Heart left ventricle (tissue), 16 donors: ENCODE measurements at regions of chr4 and their contacts with region 1.

Region 1: DNA sequence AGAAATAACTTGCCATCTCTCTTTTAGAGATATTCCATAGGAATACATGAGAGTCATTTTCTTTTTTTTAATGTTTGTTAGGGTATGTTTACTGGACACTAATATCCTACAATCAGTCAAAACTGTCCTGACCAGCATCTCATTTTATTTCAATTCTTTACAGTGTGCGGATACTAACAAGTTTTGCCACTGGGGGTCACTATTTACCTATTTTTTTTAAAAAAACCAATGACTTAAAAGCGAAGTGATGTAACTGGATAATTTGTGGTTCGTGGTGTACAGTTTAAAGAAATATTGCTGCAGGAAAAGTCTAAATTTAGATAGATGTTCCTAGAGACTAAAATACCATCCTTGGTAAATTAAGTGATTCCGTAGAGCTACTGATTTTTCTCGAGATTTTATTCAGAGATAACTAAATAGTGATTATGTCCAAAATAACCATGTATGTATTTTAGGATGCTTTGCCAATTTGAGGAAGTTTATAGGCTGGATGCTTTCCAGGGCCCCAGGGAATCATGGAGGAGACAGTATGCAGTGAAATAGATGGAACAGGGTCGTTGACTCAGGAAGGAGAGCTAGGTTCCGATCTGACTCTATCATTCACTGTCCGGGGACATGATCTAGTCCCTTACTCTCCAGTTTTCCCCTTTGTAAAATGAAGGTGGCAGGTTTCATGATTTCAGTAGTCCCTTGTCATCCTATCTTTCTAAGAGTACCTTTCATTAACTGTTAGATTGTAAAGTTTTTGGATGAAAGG is 34.0 kb upstream of the GNPDA2 start:
- DNase-seq: no peak
- ATAC-seq: peak; percentile 37 to 83 (median 68)
- H3K4me3 ChIP-seq: no peak overlapping the region
- H3K27ac ChIP-seq: peak overlapping the region in 1 of 12 donors; percentile 16
- H3K4me1 ChIP-seq: peaks cover 0 to 4% (median 0%) of the 10 kb centered on the region in 12 donors
- H3K27me3 ChIP-seq: no peaks in the 10 kb centered on the region
- CTCF ChIP-seq: peak; percentile 30 to 62 (median 48)
- POLR2A ChIP-seq: no peak

Region 2: DNA sequence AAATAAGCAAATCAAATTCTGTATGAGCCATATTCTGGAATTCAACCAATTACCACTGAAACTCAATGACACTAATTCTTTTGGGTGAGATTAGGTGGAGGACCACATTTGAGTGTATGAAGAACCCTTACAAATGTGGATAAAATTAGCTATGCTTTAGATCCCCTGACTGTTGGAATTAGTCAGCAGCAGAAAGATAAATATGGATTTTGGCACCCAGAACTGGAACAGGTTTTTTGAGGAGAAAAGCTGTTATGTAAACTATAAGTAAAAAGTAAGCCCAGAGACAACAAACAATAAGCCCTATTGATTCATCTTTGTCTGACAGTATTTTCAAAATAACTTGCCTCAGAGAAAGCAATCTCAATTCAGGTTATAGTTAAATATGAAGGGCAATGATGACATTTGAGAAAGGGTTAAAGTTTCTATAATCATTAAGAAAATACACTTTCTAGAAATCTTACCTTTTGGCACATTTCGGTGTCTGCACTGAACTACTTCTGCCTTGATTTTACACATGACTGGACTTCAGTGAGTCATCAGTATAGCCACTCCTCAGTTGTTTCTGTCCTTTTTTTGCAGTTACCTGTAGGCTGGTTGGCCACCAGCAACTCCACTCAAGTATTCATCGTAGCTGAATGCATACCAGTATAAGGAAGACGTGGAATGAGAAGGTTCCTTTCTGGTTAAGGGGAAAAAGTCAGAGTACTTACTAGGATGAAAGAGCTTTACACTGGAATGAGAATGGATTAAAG is 391.7 kb before region 1 on chr4:
- intact Hi-C with region 1: no loop called
- DNase-seq: no peak
- ATAC-seq: no peak
- H3K4me3 ChIP-seq: no peak overlapping the region
- H3K27ac ChIP-seq: no peak overlapping the region
- H3K4me1 ChIP-seq: no peaks in the 10 kb centered on the region
- H3K27me3 ChIP-seq: no peaks in the 10 kb centered on the region
- CTCF ChIP-seq: no peak
- POLR2A ChIP-seq: no peak

Region 3: GRCh38 chr4:44629280-44629866 is 130.9 kb before region 1 on chr4:
- intact Hi-C with region 1: no loop called
- DNase-seq: no peak
- ATAC-seq: peak in 2 of 4 donors; percentile 58 to 62
- H3K4me3 ChIP-seq: no peak overlapping the region
- H3K27ac ChIP-seq: no peak overlapping the region
- H3K4me1 ChIP-seq: no peaks in the 10 kb centered on the region
- H3K27me3 ChIP-seq: no peaks in the 10 kb centered on the region
- CTCF ChIP-seq: peak; percentile 48 to 75 (median 66)
- POLR2A ChIP-seq: no peak

Region 4: DNA sequence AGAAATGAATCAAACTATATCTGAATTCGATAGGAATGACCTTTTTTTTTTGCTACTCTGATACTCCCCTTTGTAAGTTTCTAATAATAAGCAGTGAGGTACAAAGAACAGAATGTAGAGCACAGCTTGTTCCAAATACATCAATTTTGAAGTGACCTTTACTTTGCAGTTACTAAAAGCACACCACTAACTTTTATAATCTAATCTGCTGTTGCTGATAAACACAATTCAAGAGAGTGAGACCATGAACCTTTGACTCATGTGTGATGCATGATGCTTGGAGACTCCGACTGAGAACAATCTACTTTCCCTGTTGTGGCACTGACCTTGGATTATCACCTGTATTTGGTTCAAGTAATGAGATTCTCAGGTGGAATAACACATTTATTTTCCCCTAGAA is 57.6 kb after region 1 on chr4:
- intact Hi-C with region 1: loop called in 2 of 10 experiments (anchors 2 to 5 kb)
- DNase-seq: no peak
- ATAC-seq: peak; percentile 91 to 96 (median 94)
- H3K4me3 ChIP-seq: no peak overlapping the region
- H3K27ac ChIP-seq: peak overlapping the region; percentile 56 to 94 (median 78)
- H3K4me1 ChIP-seq: peaks cover 0 to 15% (median 0%) of the 10 kb centered on the region in 12 donors
- H3K27me3 ChIP-seq: no peaks in the 10 kb centered on the region
- CTCF ChIP-seq: no peak
- POLR2A ChIP-seq: no peak

Region 5: DNA sequence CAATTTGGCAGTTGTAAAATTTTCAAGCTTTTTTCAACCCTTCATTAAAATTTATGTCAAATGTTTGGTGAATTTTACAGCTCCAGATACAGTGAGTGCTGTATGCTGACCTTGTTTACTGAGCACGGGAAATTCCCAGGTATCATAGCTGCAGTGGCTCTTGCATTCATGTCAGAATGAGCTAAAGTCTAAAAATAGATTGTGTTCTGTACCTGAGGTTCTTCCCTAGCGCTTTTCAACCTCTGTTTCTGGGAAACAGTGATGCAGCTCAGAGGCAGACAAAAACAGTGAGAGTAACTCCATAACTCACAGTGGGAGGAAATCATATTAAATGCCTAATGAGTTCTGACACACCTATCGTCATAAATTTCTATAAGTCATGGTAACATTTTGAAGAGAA is 359.8 kb after region 1 on chr4:
- intact Hi-C with region 1: loop called in 1 of 10 experiments (anchors 10 kb)
- DNase-seq: peak in 2 of 5 donors; percentile 21 to 31
- ATAC-seq: peak; percentile 96 to 98 (median 96)
- H3K4me3 ChIP-seq: no peak overlapping the region
- H3K27ac ChIP-seq: peak overlapping the region in 9 of 12 donors; percentile 24 to 71 (median 43)
- H3K4me1 ChIP-seq: peaks cover 0 to 3% (median 0%) of the 10 kb centered on the region in 12 donors
- H3K27me3 ChIP-seq: no peaks in the 10 kb centered on the region
- CTCF ChIP-seq: no peak
- POLR2A ChIP-seq: peak in 1 of 2 donors; percentile 35

Region 6: DNA sequence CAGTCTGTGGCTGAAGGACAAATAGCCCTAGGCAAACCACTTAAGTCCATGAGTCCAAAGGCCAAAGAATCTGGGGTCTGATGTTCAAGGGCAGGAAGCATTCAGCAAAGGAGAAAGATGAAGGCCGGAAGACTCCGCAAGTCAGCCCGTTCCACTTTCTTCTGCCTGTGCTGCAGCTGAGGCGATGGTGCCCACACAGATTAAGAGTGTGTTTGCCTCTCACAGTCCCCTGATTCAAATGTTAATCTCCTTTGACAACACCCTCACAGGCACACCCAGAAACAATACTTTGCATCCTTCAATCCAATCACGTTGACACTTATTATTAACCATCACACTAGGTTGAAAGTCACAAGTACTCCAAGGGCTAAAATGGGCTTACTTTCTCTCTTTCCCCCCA is 571.5 kb after region 1 on chr4:
- intact Hi-C with region 1: loop called in 2 of 10 experiments (anchors 10 kb)
- DNase-seq: no peak
- ATAC-seq: no peak
- H3K4me3 ChIP-seq: no peak overlapping the region
- H3K27ac ChIP-seq: no peak overlapping the region
- H3K4me1 ChIP-seq: no peaks in the 10 kb centered on the region
- H3K27me3 ChIP-seq: no peaks in the 10 kb centered on the region
- CTCF ChIP-seq: no peak
- POLR2A ChIP-seq: no peak

Region 7: DNA sequence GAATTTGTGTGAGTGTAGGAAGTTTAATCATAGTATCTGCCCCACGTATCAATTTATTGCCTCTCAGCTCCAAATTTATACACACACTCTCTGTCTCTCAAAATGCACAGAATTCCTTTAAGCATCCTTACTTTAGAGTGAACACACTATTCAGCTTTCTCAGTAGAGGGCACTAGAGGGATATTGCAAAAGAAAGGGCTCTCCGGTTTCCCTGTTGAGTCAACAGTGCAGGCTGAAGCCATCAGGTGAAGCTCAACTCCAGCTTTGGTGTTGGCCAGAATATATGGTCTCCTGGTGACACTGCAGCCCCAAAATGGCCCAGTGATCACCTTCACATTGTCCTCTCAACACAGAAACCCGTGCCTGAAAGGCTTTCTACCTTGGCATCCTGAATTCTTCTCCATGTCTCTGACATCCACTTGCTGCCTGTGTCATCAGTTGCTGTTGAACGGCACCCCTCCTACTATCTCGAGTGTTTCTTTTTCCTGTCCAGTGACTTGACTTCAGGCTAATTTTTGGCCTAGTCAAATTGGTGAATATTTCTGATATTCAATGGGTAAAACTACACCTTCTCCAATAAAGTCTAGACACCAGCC is 693.0 kb after region 1 on chr4:
- intact Hi-C with region 1: loop called in 5 of 10 experiments (anchors 10 kb)
- DNase-seq: no peak
- ATAC-seq: peak in 3 of 4 donors; percentile 58 to 75 (median 67)
- H3K4me3 ChIP-seq: no peak overlapping the region
- H3K27ac ChIP-seq: no peak overlapping the region
- H3K4me1 ChIP-seq: no peaks in the 10 kb centered on the region
- H3K27me3 ChIP-seq: no peaks in the 10 kb centered on the region
- CTCF ChIP-seq: peak; percentile 21 to 57 (median 40)
- POLR2A ChIP-seq: no peak

Region 8: GRCh38 chr4:46270986-46271596 is 1510.8 kb after region 1 on chr4:
- intact Hi-C with region 1: loop called in 7 of 10 experiments (anchors 5 to 10 kb)
- DNase-seq: no peak
- ATAC-seq: no peak
- H3K4me3 ChIP-seq: no peak overlapping the region
- H3K27ac ChIP-seq: no peak overlapping the region
- H3K4me1 ChIP-seq: no peaks in the 10 kb centered on the region
- H3K27me3 ChIP-seq: peaks cover 0 to 7% (median 0%) of the 10 kb centered on the region in 9 donors
- CTCF ChIP-seq: peak in 11 of 12 donors; percentile 21 to 51 (median 37)
- POLR2A ChIP-seq: no peak